ENCODE measurements at regions of chr2 and their contacts with region 1.

Region 1: GRCh38 chr2:203238704-203239526 is at the start of gene CYP20A1:
- DNase-seq: peak; percentile 90 to 95 (median 92)
- H3K4me3 ChIP-seq: peak within 1 kb of the TSS; percentile 71 to 90 (median 80)
- H3K4me3 Mint-ChIP-seq: peak within 1 kb of the TSS; percentile 95 to 98
- H3K27ac ChIP-seq: peak within 1 kb of the TSS; percentile 83 to 92
- H3K27ac Mint-ChIP-seq: peak within 1 kb of the TSS; percentile 92 to 98 (median 96)
- H3K4me1 ChIP-seq: peaks cover 21 to 24% of the 10 kb centered on the region in 2 donors
- H3K4me1 Mint-ChIP-seq: peaks cover 20% of the 10 kb centered on the region
- H3K27me3 ChIP-seq: no peaks in the 10 kb centered on the region
- H3K27me3 Mint-ChIP-seq: peaks cover 0 to 3% (median 0%) of the 10 kb centered on the region in 3 donors
- CTCF ChIP-seq: peak; percentile 10
- polyA plus RNA-seq, gene CYP20A1: 13.3 to 17.6 (median 15.4) TPM

Region 2: DNA sequence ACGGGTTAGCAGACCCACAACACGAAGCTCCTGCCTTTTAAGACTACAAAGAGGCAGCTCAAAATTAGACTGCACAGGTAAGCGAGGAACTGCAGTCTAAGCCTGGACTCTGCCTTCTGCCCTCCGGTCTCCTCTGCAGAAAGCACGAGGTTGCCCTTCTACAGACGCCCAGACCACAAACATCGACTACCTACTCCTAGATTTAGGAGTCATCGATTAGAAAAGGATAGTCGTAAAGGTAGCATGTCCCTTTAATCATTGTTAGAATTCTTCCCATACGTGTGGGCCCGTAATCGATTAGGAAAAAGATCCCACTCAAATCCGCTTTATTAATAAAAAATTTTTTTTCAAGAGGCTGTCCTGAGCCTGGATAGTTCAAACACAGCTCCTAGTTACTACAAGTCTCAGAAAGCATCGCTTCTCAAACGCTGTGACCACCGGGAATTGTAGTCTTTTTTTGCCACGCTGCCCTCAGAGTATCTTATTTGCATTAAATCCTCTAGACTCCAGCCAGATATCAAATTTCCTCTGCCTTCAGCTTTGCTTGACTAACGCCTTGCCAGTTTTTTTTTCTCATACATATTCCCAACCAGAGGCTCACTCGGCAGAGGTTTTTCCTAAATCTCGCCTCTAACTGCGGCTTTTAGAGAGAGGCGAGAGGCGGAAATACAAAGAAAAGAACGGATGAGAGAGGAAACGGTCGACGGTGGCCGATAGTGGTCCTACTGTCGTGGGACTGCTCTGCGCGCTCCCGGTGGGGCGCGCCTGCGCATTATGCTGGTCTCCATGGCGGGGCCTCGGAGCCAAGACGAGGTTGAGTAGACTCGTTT is 327.2 kb before region 1 on chr2 and contains the starts of genes CARF and WDR12:
- intact Hi-C with region 1: loop called (anchors 2 to 5 kb)
- DNase-seq: peak; percentile 87 to 92 (median 89)
- H3K4me3 ChIP-seq: peak within 1 kb of the TSS; percentile 65 to 99 (median 95)
- H3K4me3 Mint-ChIP-seq: peak within 1 kb of the TSS; percentile 97
- H3K27ac ChIP-seq: peak within 1 kb of the TSS; percentile 76 to 81
- H3K27ac Mint-ChIP-seq: peak within 1 kb of the TSS; percentile 91 to 99 (median 97)
- H3K4me1 ChIP-seq: peaks cover 19 to 22% of the 10 kb centered on the region in 2 donors
- H3K4me1 Mint-ChIP-seq: peaks cover 32% of the 10 kb centered on the region
- H3K27me3 ChIP-seq: no peaks in the 10 kb centered on the region
- H3K27me3 Mint-ChIP-seq: no peaks in the 10 kb centered on the region
- CTCF ChIP-seq: no peak
- polyA plus RNA-seq, gene CARF: 1.1 to 4.6 (median 2.8) TPM
- polyA plus RNA-seq, gene WDR12: 4.1 to 14.6 (median 6.5) TPM

Region 3: DNA sequence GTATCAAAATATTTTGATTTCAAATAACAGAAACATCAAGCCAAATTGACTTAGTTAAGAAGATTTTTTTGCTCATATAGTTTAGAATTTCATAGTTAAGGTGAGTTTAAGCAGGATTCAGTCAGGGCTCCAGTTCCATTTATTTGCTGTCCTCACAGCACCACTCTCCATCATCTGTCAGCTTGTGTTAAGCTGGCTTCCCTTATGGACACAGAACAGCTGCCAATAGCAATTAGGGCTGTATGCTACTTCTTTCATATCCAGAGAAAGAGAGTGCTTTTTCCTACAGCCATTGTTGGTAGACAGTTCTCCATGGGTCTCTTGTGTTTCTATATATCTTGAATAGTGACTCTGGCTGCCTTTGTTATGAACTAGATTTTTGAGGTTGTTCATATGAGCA is 95.5 kb before region 1 on chr2:
- intact Hi-C with region 1: no loop called
- DNase-seq: no peak
- H3K4me3 ChIP-seq: no peak overlapping the region
- H3K4me3 Mint-ChIP-seq: no peak overlapping the region
- H3K27ac ChIP-seq: no peak overlapping the region
- H3K27ac Mint-ChIP-seq: no peak overlapping the region
- H3K4me1 ChIP-seq: no peaks in the 10 kb centered on the region
- H3K4me1 Mint-ChIP-seq: no peaks in the 10 kb centered on the region
- H3K27me3 ChIP-seq: no peaks in the 10 kb centered on the region
- H3K27me3 Mint-ChIP-seq: no peaks in the 10 kb centered on the region
- CTCF ChIP-seq: no peak

Region 4: DNA sequence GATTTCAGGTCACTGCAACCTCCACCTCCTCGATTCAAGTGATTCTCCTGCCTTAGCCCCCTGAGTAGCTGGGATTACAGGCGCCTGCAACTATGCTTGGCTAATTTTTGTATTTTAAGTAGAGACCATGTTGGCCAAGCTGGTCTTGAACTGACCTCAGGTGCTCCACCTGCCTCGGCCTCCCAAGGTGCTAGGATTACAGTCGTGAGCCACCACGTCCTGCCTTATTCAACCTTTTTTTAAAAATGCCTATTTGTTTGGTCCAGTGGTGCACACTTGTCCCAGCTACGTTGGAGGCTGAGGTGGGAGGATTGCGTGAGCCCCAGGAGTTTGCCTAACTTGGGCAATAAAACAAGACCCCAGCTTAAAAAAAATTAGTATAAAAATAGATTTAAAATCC is 43.2 kb after region 1 on chr2:
- intact Hi-C with region 1: no loop called
- DNase-seq: no peak
- H3K4me3 ChIP-seq: no peak overlapping the region
- H3K4me3 Mint-ChIP-seq: no peak overlapping the region
- H3K27ac ChIP-seq: no peak overlapping the region
- H3K27ac Mint-ChIP-seq: no peak overlapping the region
- H3K4me1 ChIP-seq: no peaks in the 10 kb centered on the region
- H3K4me1 Mint-ChIP-seq: no peaks in the 10 kb centered on the region
- H3K27me3 ChIP-seq: no peaks in the 10 kb centered on the region
- H3K27me3 Mint-ChIP-seq: no peaks in the 10 kb centered on the region
- CTCF ChIP-seq: no peak

Region 5: GRCh38 chr2:203396667-203397066 is 157.8 kb after region 1 on chr2:
- intact Hi-C with region 1: no loop called
- DNase-seq: no peak
- H3K4me3 ChIP-seq: no peak overlapping the region
- H3K4me3 Mint-ChIP-seq: no peak overlapping the region
- H3K27ac ChIP-seq: no peak overlapping the region
- H3K27ac Mint-ChIP-seq: peak overlapping the region in 1 of 7 donors; percentile 9
- H3K4me1 ChIP-seq: no peaks in the 10 kb centered on the region
- H3K4me1 Mint-ChIP-seq: peaks cover 3% of the 10 kb centered on the region
- H3K27me3 ChIP-seq: no peaks in the 10 kb centered on the region
- H3K27me3 Mint-ChIP-seq: peaks cover 0 to 3% (median 2%) of the 10 kb centered on the region in 3 donors
- CTCF ChIP-seq: no peak

Region 6: GRCh38 chr2:203900253-203900652 is 661.3 kb after region 1 on chr2:
- intact Hi-C with region 1: loop called in 1 of 2 experiments (anchors 5 kb)
- DNase-seq: no peak
- H3K4me3 ChIP-seq: no peak overlapping the region
- H3K4me3 Mint-ChIP-seq: no peak overlapping the region
- H3K27ac ChIP-seq: no peak overlapping the region
- H3K27ac Mint-ChIP-seq: no peak overlapping the region
- H3K4me1 ChIP-seq: peaks cover 37 to 43% of the 10 kb centered on the region in 2 donors
- H3K4me1 Mint-ChIP-seq: peaks cover 39% of the 10 kb centered on the region
- H3K27me3 ChIP-seq: no peaks in the 10 kb centered on the region
- H3K27me3 Mint-ChIP-seq: peaks cover 0 to 1% (median 0%) of the 10 kb centered on the region in 3 donors
- CTCF ChIP-seq: no peak

Measured in CD14-positive monocyte (primary cell).